BJ (cell line): ENCODE measurements at regions of chr11 and their contacts with region 1.

Region 1: DNA sequence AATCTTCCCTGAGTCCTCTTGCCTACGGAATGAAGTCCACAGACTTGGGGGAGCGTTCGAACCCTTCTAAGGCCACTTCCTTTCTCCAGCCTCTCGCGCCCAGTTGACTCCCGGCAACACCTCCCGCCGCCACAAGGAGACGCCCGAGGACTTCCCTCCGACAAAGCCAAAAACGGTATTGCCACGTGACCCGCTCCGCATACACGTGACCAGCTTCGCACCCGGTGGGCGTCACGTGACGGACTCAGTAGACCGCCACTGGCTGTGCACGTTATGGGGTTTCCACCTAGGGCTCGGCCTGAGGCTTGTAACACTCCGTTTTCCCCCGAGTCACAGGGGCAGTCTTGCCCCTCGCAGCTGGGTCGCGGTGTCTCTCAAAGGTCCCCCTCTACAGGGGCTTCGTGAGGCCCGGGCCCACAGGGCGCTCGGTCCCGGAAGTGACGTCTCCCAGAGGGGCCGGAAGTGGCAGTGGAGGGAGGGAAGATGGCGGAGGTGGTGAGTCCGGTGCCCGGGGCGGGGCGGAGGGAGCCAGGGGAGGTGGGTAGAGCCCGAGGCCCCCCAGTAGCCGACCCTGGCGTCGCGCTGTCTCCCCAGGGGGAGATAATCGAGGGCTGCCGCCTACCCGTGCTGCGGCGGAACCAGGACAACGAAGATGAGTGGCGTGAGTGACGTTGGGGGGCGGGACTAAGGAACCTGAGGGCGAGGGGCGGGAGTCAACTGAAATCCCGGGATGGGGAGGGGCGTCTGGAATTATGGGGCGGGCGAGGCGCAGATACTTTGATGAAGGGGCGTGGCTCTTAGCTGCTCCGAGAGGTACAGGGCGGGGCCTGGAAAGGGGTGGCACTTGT is at the start of gene KAT5:
- DNase-seq: peak; percentile 85
- H3K4me3 ChIP-seq: peak within 1 kb of the TSS; percentile 71
- H3K27me3 ChIP-seq: no peaks in the 10 kb centered on the region
- CTCF ChIP-seq: peak; percentile 98
- polyA plus RNA-seq, gene KAT5: 31.4 and 50.9 TPM in 2 replicates

Region 2: GRCh38 chr11:65569973-65570918 is 141.8 kb before region 1 on chr11 and contains the start of gene ZNRD2:
- CTCF ChIA-PET with region 1: no interaction called
- POLR2A ChIA-PET with region 1: no interaction called
- DNase-seq: peak; percentile 89
- H3K4me3 ChIP-seq: peak within 1 kb of the TSS; percentile 93
- H3K27me3 ChIP-seq: no peaks in the 10 kb centered on the region
- CTCF ChIP-seq: peak; percentile 57
- polyA plus RNA-seq, gene ZNRD2: 48.7 and 73.3 TPM in 2 replicates

Region 3: GRCh38 chr11:65652511-65653231 is 59.3 kb before region 1 on chr11:
- CTCF ChIA-PET with region 1: interaction called, 5 read pairs
- POLR2A ChIA-PET with region 1: interaction called, 12 read pairs
- DNase-seq: peak; percentile 66
- H3K4me3 ChIP-seq: peak overlapping the region; percentile 47
- H3K27me3 ChIP-seq: no peaks in the 10 kb centered on the region
- CTCF ChIP-seq: no peak

Region 4: DNA sequence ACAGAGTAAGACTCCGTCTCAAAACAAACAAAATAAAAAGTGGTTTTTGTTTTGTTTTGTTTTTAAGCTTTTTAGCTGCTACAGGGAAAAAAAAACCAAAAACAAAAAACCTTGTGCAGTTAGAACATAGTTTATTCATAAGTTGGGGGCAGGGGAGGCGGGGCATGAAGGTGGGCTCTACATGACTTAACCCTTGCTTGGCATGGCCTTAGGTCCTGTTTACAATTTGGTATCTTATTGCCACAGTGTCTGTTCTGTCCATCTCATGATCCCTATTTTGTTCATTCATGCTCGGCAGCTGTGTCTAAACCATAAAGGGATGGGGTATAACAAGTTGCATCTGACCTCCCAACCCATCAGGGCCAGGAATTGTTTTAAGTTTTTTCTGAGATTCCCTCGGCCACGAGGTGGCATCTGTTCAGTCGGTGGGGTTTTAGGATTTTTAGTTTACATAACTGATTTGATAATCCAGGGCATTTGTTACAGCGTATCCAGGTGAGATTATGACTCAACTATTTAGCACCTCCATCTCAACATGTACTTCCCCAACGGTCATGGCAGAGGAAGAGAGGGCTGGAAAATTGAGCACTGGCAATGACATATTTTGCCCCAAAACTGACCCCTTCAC is 61.9 kb after region 1 on chr11:
- CTCF ChIA-PET with region 1: interaction called, 50 read pairs
- POLR2A ChIA-PET with region 1: interaction called, 3 read pairs
- DNase-seq: no peak
- H3K4me3 ChIP-seq: no peak overlapping the region
- H3K27me3 ChIP-seq: no peaks in the 10 kb centered on the region
- CTCF ChIP-seq: peak; percentile 18; the same call in 1 of the 2 replicates

Region 5: GRCh38 chr11:65791691-65792213 is 79.7 kb after region 1 on chr11:
- CTCF ChIA-PET with region 1: interaction called, 16 read pairs
- POLR2A ChIA-PET with region 1: no interaction called
- DNase-seq: no peak
- H3K4me3 ChIP-seq: no peak overlapping the region
- H3K27me3 ChIP-seq: peaks cover 31% of the 10 kb centered on the region
- CTCF ChIP-seq: no peak

Region 6: GRCh38 chr11:65833297-65834030 is 121.5 kb after region 1 on chr11 and contains the start of gene SNX32:
- CTCF ChIA-PET with region 1: interaction called, 10 read pairs
- POLR2A ChIA-PET with region 1: no interaction called
- DNase-seq: peak; percentile 27
- H3K4me3 ChIP-seq: peak within 1 kb of the TSS; percentile 60
- H3K27me3 ChIP-seq: peaks cover 16% of the 10 kb centered on the region
- CTCF ChIP-seq: no peak
- polyA plus RNA-seq, gene SNX32: 0.13 and 0.22 TPM in 2 replicates

Region 7: DNA sequence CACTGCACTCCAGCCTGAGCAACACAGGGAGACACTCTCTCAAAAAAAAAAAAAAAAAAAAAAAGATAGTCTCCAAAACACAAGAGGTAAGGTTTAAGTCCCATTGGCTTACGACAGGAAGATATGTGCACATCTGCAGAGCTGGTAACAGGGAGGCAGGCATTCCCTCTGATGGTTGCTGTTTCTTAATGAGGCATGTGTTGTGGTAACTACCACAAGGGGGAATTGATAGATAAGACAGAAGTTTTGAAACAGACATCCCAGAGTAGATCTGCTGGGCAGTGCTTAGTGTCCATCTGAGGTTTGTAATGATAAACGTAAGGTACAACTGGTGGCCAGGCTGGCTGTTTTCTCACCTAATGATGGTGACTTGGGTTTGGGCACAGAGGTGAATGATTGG is 285.3 kb after region 1 on chr11:
- CTCF ChIA-PET with region 1: no interaction called
- POLR2A ChIA-PET with region 1: no interaction called
- DNase-seq: no peak
- H3K4me3 ChIP-seq: no peak overlapping the region
- H3K27me3 ChIP-seq: no peaks in the 10 kb centered on the region
- CTCF ChIP-seq: no peak

Region 8: GRCh38 chr11:66181628-66182321 is 469.8 kb after region 1 on chr11:
- CTCF ChIA-PET with region 1: no interaction called
- POLR2A ChIA-PET with region 1: no interaction called
- DNase-seq: no peak
- H3K4me3 ChIP-seq: no peak overlapping the region
- H3K27me3 ChIP-seq: no peaks in the 10 kb centered on the region
- CTCF ChIP-seq: no peak